Right cardiac atrium (tissue), 5 donors: ENCODE measurements at regions of chr15 and their contacts with region 1.

Region 1: GRCh38 chr15:70892002-70892914 is at the starts of genes LRRC49 and THAP10:
- DNase-seq: peak; percentile 90 to 96 (median 93)
- ATAC-seq: peak; percentile 99
- H3K4me3 ChIP-seq: peak within 1 kb of the TSS; percentile 85
- H3K27ac ChIP-seq: peak within 1 kb of the TSS; percentile 71
- H3K4me1 ChIP-seq: no peaks in the 10 kb centered on the region
- H3K27me3 ChIP-seq: no peaks in the 10 kb centered on the region
- total RNA-seq, gene LRRC49: 41.2 to 53.7 (median 49.4) TPM
- total RNA-seq, gene THAP10: 1.8 to 4.9 (median 4.1) TPM

Region 2: DNA sequence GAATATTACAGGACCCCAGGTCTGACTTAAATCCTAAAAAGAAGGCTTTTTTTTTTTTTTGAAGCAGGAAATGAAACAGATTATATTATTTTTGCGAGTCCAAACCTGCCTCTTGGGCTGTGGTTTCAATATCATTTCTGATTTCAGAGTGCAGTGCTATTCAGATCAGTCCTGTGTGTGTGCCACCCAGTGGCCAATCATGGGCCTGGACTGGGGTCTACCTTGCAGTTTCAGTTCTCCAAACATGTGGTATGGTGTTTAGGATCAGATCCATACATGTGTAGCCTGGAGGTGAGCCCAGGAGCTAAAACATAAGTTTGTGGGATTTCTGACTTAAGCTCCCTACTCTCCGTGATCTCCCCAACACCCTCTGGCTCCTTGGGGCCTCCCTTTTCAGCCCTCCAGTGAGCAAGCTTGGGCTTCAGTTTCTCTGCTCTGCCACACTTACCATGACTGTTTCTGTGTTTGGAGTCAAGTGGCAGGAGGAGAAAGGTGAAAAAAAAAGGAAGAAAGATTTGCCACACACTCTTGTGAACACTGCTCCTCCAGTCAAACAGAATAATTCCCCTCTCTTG is 210.9 kb after region 1 on chr15:
- intact Hi-C with region 1: loop called in 2 of 4 experiments (anchors 10 kb)
- DNase-seq: peak in 2 of 3 donors; percentile 16 to 59
- ATAC-seq: peak; percentile 51 to 58
- H3K4me3 ChIP-seq: no peak overlapping the region
- H3K27ac ChIP-seq: no peak overlapping the region
- H3K4me1 ChIP-seq: no peaks in the 10 kb centered on the region
- H3K27me3 ChIP-seq: no peaks in the 10 kb centered on the region

Region 3: DNA sequence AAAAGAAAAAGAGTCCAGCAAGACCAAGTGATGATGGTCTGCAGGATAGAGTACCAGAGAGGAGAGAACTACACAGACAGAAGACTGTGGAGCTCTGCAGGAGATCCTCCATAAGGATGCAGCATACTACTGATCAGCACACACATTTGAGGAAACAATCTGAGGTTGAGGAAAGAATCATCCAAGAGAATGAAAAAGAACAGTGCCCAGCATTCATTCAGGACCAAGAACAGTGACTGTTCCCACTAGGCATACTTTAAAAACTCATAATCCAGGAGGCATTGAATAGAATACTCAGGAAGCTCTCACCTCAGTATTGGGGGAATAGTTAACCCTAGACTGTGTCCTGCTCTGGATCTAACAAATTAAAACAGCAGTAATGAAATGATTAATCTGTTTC is 277.9 kb after region 1 on chr15:
- intact Hi-C with region 1: no loop called
- DNase-seq: no peak
- ATAC-seq: no peak
- H3K4me3 ChIP-seq: no peak overlapping the region
- H3K27ac ChIP-seq: no peak overlapping the region
- H3K4me1 ChIP-seq: no peaks in the 10 kb centered on the region
- H3K27me3 ChIP-seq: no peaks in the 10 kb centered on the region